ENCODE measurements at regions of chr19 and their contacts with region 1.

Region 1: DNA sequence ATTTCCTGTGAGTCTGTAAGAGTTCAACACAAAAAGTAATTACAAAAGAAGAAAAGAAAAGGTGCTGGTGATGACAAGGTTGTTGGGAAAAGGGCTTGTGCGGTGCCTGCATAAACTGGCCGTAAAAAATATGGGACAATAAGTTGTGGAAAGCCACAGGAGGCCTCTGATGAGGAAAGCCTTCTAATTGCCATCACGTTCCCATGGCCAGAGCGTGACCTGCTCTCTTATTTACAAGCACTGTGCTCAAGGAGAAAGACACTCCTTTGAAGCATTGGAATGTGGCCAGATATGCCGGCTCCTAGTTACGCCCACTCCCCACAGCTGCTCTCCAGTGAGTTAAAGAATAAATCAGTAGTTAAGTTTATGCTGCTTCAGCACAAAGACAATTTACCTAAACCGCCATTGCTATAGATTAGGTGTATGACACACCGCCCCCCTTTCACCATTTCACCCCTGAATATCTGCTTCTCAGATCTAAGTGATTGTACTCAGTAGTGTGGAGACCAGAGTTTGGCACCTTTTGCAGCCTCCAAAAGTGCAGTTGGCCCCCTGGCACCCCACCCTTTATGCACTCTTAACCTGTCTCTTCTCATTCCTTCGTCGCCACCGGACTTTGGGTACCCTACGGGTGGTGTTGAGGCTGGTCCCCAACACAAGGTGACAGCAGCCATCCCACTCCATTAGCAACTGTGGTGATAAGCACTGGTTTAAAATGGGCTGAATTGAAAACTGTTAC is 8.1 kb upstream of the PGLYRP1 start:
- DNase-seq: no peak
- H3K4me3 Mint-ChIP-seq: no peak overlapping the region
- H3K27ac Mint-ChIP-seq: no peak overlapping the region
- H3K4me1 Mint-ChIP-seq: no peaks in the 10 kb centered on the region
- H3K27me3 Mint-ChIP-seq: peaks cover 26% of the 10 kb centered on the region
- CTCF ChIP-seq: no peak

Region 2: DNA sequence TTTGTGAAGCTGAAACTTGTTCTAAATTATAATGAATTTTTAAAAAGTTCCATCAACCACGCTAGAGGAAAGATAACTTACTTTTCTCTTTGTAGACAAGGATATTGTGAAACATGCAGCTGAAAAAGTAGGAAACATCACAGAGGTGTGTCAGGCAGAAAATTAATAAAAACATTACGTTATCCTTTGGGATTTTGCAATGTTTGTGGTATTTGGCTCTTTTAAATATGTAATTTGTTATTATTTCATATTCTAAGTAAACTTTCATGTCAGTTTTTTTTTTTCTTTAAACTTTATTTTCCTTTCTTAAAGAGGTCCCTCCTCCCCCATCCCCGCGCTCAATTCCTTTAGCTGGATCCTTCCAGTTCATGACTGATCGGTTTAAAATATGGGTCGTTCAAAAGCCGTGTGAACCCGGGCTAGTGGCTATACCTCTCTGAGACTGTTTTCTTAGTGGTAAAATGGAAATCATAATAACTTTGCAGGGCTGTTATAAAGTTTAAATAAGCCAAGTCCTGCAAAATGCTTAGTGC is 36.5 kb before region 1 on chr19:
- CTCF ChIA-PET with region 1: interaction called, 15 read pairs
- intact Hi-C with region 1: no loop called
- DNase-seq: no peak
- H3K4me3 Mint-ChIP-seq: no peak overlapping the region
- H3K27ac Mint-ChIP-seq: no peak overlapping the region
- H3K4me1 Mint-ChIP-seq: peaks cover 4% of the 10 kb centered on the region
- H3K27me3 Mint-ChIP-seq: peaks cover 15% of the 10 kb centered on the region
- CTCF ChIP-seq: no peak

Region 3: GRCh38 chr19:46049597-46049996 is 18.6 kb after region 1 on chr19:
- CTCF ChIA-PET with region 1: interaction called, 11 read pairs
- intact Hi-C with region 1: no loop called
- DNase-seq: peak; percentile 20
- H3K4me3 Mint-ChIP-seq: no peak overlapping the region
- H3K27ac Mint-ChIP-seq: no peak overlapping the region
- H3K4me1 Mint-ChIP-seq: no peaks in the 10 kb centered on the region
- H3K27me3 Mint-ChIP-seq: peaks cover 98% of the 10 kb centered on the region
- CTCF ChIP-seq: no peak

Region 4: GRCh38 chr19:46076951-46077816 is 46.2 kb after region 1 on chr19:
- CTCF ChIA-PET with region 1: interaction called, 74 read pairs
- intact Hi-C with region 1: loop called (anchors 1 kb)
- DNase-seq: peak; percentile 86
- H3K4me3 Mint-ChIP-seq: peak overlapping the region; percentile 63
- H3K27ac Mint-ChIP-seq: no peak overlapping the region
- H3K4me1 Mint-ChIP-seq: peaks cover 14% of the 10 kb centered on the region
- H3K27me3 Mint-ChIP-seq: peaks cover 100% of the 10 kb centered on the region
- CTCF ChIP-seq: peak; percentile 98

Region 5: DNA sequence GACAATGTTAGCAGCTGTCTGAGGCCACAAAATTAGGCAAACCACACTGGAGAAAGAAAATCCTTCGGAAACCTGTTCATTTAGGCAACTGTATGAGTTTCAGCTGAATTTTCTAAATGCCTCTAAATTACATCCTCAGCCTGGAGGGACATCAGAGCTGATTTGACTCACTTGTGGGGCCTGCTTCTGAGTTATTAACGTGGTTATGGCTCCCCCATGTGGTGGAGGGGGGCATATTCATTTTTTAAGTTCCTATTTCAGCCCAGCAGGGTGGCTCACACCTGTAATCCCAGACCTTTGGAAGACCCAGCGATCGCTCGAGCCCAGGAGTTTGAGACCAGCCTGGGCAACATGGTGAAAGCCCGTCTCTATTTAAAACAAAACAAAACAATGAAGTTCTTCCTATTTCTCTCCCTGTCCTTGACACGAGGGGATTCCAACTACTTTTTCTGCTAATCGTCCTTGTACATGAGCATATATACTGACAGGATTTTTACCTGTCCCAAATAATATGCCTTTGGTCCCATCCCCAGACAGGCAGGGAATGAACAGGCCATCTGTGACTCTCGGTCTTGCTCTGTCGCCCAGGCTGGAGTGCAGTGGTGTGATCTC is 234.3 kb after region 1 on chr19:
- CTCF ChIA-PET with region 1: interaction called, 5 read pairs
- intact Hi-C with region 1: loop called (anchors 1 kb)
- DNase-seq: peak; percentile 88
- H3K4me3 Mint-ChIP-seq: no peak overlapping the region
- H3K27ac Mint-ChIP-seq: no peak overlapping the region
- H3K4me1 Mint-ChIP-seq: peaks cover 12% of the 10 kb centered on the region
- H3K27me3 Mint-ChIP-seq: peaks cover 71% of the 10 kb centered on the region
- CTCF ChIP-seq: peak; percentile 83

Measured in Calu3 (cell line).